Naive thymus-derived CD4-positive, alpha-beta T cell (primary cell): ENCODE measurements at regions of chr10 and their contacts with region 1.

Region 1: GRCh38 chr10:103678178-103678526 is 177.2 kb downstream of the SH3PXD2A start:
- DNase-seq: peak; percentile 67 to 97 (median 87)
- ATAC-seq: peak; percentile 98
- H3K4me3 ChIP-seq: peak overlapping the region; percentile 57
- H3K4me3 Mint-ChIP-seq: peak overlapping the region; percentile 76 to 92 (median 86)
- H3K27ac ChIP-seq: peak overlapping the region; percentile 87
- H3K27ac Mint-ChIP-seq: peak overlapping the region; percentile 83 to 99 (median 95)
- H3K4me1 ChIP-seq: peaks cover 18% of the 10 kb centered on the region in 2 donors
- H3K4me1 Mint-ChIP-seq: peaks cover 3 to 24% (median 17%) of the 10 kb centered on the region in 7 donors
- H3K27me3 ChIP-seq: no peaks in the 10 kb centered on the region
- H3K27me3 Mint-ChIP-seq: no peaks in the 10 kb centered on the region

Region 2: GRCh38 chr10:103605359-103606095 is 72.6 kb before region 1 on chr10:
- CTCF ChIA-PET with region 1: interaction called, 13 read pairs
- POLR2A ChIA-PET with region 1: no interaction called
- intact Hi-C with region 1: no loop called
- DNase-seq: peak in 8 of 9 donors; percentile 12 to 51 (median 27)
- ATAC-seq: peak; percentile 56
- H3K4me3 ChIP-seq: no peak overlapping the region
- H3K4me3 Mint-ChIP-seq: no peak overlapping the region
- H3K27ac ChIP-seq: no peak overlapping the region
- H3K27ac Mint-ChIP-seq: no peak overlapping the region
- H3K4me1 ChIP-seq: no peaks in the 10 kb centered on the region
- H3K4me1 Mint-ChIP-seq: no peaks in the 10 kb centered on the region
- H3K27me3 ChIP-seq: no peaks in the 10 kb centered on the region
- H3K27me3 Mint-ChIP-seq: no peaks in the 10 kb centered on the region

Region 3: GRCh38 chr10:103659674-103660363 is 18.3 kb before region 1 on chr10:
- CTCF ChIA-PET with region 1: interaction called, 4 read pairs
- POLR2A ChIA-PET with region 1: interaction called, 26 read pairs
- intact Hi-C with region 1: loop called (anchors 1 kb)
- DNase-seq: peak in 8 of 9 donors; percentile 48 to 70 (median 62)
- ATAC-seq: peak; percentile 82
- H3K4me3 ChIP-seq: peak overlapping the region; percentile 96
- H3K4me3 Mint-ChIP-seq: peak overlapping the region; percentile 83 to 94 (median 89)
- H3K27ac ChIP-seq: peak overlapping the region; percentile 92
- H3K27ac Mint-ChIP-seq: peak overlapping the region; percentile 87 to 95 (median 91)
- H3K4me1 ChIP-seq: peaks cover 4 to 6% of the 10 kb centered on the region in 2 donors
- H3K4me1 Mint-ChIP-seq: peaks cover 6 to 21% (median 13%) of the 10 kb centered on the region in 7 donors
- H3K27me3 ChIP-seq: no peaks in the 10 kb centered on the region
- H3K27me3 Mint-ChIP-seq: no peaks in the 10 kb centered on the region

Region 4: GRCh38 chr10:103666087-103666761 is 11.9 kb before region 1 on chr10:
- CTCF ChIA-PET with region 1: interaction called, 4 read pairs
- POLR2A ChIA-PET with region 1: interaction called, 26 read pairs
- intact Hi-C with region 1: no loop called
- DNase-seq: no peak
- ATAC-seq: no peak
- H3K4me3 ChIP-seq: no peak overlapping the region
- H3K4me3 Mint-ChIP-seq: no peak overlapping the region
- H3K27ac ChIP-seq: no peak overlapping the region
- H3K27ac Mint-ChIP-seq: peak overlapping the region in 7 of 9 donors; percentile 21 to 86 (median 55)
- H3K4me1 ChIP-seq: peaks cover 4 to 15% of the 10 kb centered on the region in 2 donors
- H3K4me1 Mint-ChIP-seq: peaks cover 15 to 37% (median 24%) of the 10 kb centered on the region in 7 donors
- H3K27me3 ChIP-seq: no peaks in the 10 kb centered on the region
- H3K27me3 Mint-ChIP-seq: no peaks in the 10 kb centered on the region

Region 5: DNA sequence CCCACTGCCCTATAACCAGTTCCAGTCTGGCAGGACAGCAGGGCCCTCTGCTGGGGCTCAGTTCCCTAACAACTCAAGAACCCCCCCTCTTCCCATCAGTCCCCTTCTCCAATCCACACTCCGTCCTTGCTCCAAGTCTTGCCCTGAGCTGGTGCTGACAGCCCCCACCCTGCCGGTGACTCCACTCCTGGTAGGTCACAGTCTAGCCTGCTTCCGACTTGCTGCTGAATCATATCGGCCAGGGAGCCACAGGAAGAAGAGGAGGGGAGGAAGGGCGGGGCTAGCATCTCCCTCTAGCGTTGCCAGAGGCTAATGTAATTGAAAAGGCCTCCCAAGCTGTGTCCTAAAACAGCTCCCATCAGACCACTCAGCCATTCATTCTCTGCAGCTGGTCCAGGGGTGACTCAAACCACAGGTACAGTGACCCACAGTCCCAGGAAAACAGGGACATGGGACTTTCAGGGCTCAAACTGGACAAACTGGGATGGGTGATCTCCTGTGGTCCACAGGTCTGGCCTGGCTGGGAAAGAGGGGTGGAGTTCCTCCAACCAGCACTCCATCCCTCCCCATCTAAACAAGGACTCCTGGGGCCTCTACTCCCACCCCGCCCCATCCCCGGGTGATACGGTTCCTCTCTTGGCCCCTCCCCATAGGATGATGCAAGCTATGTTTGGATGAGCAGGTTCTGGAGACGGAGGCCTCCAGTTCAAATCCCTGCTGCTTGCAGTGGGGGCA is 18.4 kb after region 1 on chr10:
- CTCF ChIA-PET with region 1: no interaction called
- POLR2A ChIA-PET with region 1: no interaction called
- intact Hi-C with region 1: loop called in 1 of 2 experiments (anchors 1 kb)
- DNase-seq: peak in 7 of 9 donors; percentile 29 to 74 (median 35)
- ATAC-seq: peak; percentile 74
- H3K4me3 ChIP-seq: no peak overlapping the region
- H3K4me3 Mint-ChIP-seq: peak overlapping the region in 8 of 10 donors; percentile 7 to 83 (median 50)
- H3K27ac ChIP-seq: no peak overlapping the region
- H3K27ac Mint-ChIP-seq: peak overlapping the region in 6 of 9 donors; percentile 3 to 88 (median 64)
- H3K4me1 ChIP-seq: peaks cover 16 to 27% of the 10 kb centered on the region in 2 donors
- H3K4me1 Mint-ChIP-seq: peaks cover 15 to 43% (median 23%) of the 10 kb centered on the region in 7 donors
- H3K27me3 ChIP-seq: no peaks in the 10 kb centered on the region
- H3K27me3 Mint-ChIP-seq: peaks cover 0 to 6% (median 0%) of the 10 kb centered on the region in 5 donors

Region 6: DNA sequence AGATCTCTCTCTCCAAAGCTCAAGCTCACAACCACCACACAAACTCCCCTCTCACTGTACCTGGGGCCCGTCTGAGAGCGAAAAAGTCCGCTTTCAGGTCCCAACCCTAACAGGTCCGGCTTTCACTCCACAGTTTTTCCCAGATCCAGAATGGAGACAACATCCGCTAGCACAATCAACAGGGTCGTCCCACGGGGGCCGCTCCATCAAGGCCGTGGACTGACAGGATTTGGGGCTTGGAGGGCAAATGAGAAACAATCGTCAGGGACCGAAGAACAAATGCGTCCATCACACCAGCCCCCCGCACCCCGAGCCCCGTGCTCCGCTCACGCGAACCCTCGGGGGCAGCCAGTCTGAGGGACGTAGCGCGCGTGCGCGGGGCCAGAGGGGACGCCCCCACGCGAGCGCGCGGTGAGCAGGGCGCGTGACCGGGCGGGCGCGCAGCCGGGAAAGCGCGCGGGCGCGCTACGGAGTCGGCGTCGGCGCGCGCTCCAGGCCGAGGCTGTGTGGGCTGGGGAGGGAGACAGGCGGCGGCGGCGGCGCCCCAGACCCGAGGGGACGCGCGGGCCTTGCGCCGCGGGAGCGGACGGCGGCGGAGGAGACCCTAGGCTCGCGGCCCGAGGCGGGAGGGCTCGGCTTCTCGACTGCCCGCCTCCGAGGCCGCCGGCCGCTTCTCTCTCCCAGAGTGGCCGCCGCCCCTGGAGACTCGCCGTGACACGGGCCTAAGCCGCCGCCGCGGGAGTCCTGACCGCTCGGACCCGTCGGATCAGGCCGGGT is 288.7 kb after region 1 on chr10 and contains the start of gene SLK:
- CTCF ChIA-PET with region 1: no interaction called
- POLR2A ChIA-PET with region 1: no interaction called
- intact Hi-C with region 1: no loop called
- DNase-seq: peak; percentile 74 to 93 (median 87)
- ATAC-seq: peak; percentile 96
- H3K4me3 ChIP-seq: peak within 1 kb of the TSS; percentile 81
- H3K4me3 Mint-ChIP-seq: peak within 1 kb of the TSS; percentile 93 to 100 (median 98)
- H3K27ac ChIP-seq: peak within 1 kb of the TSS; percentile 78
- H3K27ac Mint-ChIP-seq: peak within 1 kb of the TSS; percentile 91 to 96 (median 94)
- H3K4me1 ChIP-seq: peaks cover 3 to 11% of the 10 kb centered on the region in 2 donors
- H3K4me1 Mint-ChIP-seq: peaks cover 17 to 56% (median 44%) of the 10 kb centered on the region in 7 donors
- H3K27me3 ChIP-seq: no peaks in the 10 kb centered on the region
- H3K27me3 Mint-ChIP-seq: no peaks in the 10 kb centered on the region
- total RNA-seq, gene SLK: 21.4 to 32.2 (median 26.2) TPM